WTC11 (cell line): ENCODE measurements at regions of chr22 and their contacts with region 1.

Region 1: GRCh38 chr22:45831394-45831793 is 145.6 kb downstream of the WNT7B start:
- DNase-seq: no peak
- ATAC-seq: no peak
- H3K4me3 Mint-ChIP-seq: no peak overlapping the region
- H3K27ac Mint-ChIP-seq: no peak overlapping the region
- H3K4me1 Mint-ChIP-seq: peaks cover 20% of the 10 kb centered on the region
- H3K27me3 Mint-ChIP-seq: no peaks in the 10 kb centered on the region
- CTCF ChIP-seq: no peak

Region 2: DNA sequence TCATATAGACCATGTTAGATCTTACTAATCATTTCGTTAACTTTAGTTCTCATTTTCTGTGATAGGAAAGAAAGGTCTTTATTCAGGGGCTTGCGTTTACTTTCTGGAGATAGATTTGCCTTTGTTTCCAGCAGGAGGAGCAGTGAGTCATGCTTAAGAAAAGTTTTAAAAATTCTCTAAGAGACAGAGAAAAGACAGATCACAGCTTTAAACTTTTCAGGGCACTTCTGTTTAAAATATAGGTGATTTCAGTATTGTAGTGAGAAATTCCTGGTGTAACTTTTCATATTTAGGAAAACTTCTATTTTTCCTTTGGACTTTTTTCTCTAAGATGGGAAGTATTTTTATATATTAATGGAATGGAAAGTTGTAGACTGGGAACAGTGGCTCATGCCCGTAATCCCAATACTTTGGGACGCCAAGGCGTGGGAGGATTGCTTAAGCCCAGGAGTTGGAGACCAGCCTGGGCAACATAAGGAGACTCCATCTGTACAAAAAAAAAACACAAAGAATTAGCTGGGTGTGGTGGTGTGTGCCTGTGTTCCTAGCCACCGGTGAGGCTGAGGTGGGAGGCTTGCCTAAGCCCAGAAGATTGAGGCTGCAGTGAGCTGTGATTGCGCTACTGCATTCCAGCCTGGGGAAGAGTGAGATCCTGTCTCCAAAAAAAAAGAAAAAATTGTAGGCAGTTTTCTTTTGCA is 99.4 kb before region 1 on chr22:
- CTCF ChIA-PET with region 1: interaction called, 10 read pairs
- POLR2A ChIA-PET with region 1: no interaction called
- DNase-seq: no peak
- ATAC-seq: 0 out of 2 replicates have a peak, but pooled peaks have one; percentile 20
- H3K4me3 Mint-ChIP-seq: no peak overlapping the region
- H3K27ac Mint-ChIP-seq: peak overlapping the region; percentile 92
- H3K4me1 Mint-ChIP-seq: peaks cover 8% of the 10 kb centered on the region
- H3K27me3 Mint-ChIP-seq: no peaks in the 10 kb centered on the region
- CTCF ChIP-seq: no peak

Region 3: GRCh38 chr22:45845076-45845487 is 13.7 kb after region 1 on chr22:
- CTCF ChIA-PET with region 1: interaction called, 14 read pairs
- POLR2A ChIA-PET with region 1: no interaction called
- DNase-seq: no peak
- ATAC-seq: peak; percentile 55
- H3K4me3 Mint-ChIP-seq: peak overlapping the region; percentile 51
- H3K27ac Mint-ChIP-seq: peak overlapping the region; percentile 92
- H3K4me1 Mint-ChIP-seq: peaks cover 50% of the 10 kb centered on the region
- H3K27me3 Mint-ChIP-seq: no peaks in the 10 kb centered on the region
- CTCF ChIP-seq: no peak

Region 4: DNA sequence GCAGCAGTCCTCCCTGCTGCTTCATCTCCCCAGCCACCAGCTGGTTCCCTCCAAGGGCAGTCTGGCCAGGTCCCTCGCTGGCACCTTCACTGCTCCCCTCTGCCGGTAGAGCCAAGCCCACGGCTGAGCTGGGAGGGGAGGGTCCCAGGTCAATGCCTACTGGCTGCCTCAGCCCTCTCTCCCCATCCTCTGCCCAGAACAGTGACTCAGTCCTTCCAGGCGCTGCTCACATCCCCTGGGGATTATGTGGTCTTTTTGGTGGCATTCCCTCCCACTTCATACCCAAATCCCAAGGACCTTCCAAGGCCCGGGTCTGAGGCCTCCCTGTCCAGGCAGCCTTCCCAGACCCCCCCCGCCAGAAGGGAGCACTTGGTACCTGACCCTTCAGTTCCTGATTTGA is 100.7 kb after region 1 on chr22:
- CTCF ChIA-PET with region 1: no interaction called
- POLR2A ChIA-PET with region 1: no interaction called
- DNase-seq: no peak
- ATAC-seq: no peak
- H3K4me3 Mint-ChIP-seq: no peak overlapping the region
- H3K27ac Mint-ChIP-seq: no peak overlapping the region
- H3K4me1 Mint-ChIP-seq: no peaks in the 10 kb centered on the region
- H3K27me3 Mint-ChIP-seq: no peaks in the 10 kb centered on the region
- CTCF ChIP-seq: no peak